MCF 10A (cell line): ENCODE measurements at regions of chr1 and their contacts with region 1.

Region 1: GRCh38 chr1:45654540-45655280 is 30.9 kb upstream of the CCDC17 start:
- DNase-seq: peak; percentile 46
- H3K4me3 Mint-ChIP-seq: no peak overlapping the region
- H3K27ac Mint-ChIP-seq: peak overlapping the region; percentile 8
- H3K4me1 Mint-ChIP-seq: peaks cover 14% of the 10 kb centered on the region
- H3K27me3 Mint-ChIP-seq: no peaks in the 10 kb centered on the region
- CTCF ChIP-seq: no peak

Region 2: GRCh38 chr1:45430490-45430889 is 224.2 kb before region 1 on chr1:
- CTCF ChIA-PET with region 1: no interaction called
- POLR2A ChIA-PET with region 1: no interaction called
- intact Hi-C with region 1: no loop called
- DNase-seq: no peak
- H3K4me3 Mint-ChIP-seq: no peak overlapping the region
- H3K27ac Mint-ChIP-seq: no peak overlapping the region
- H3K4me1 Mint-ChIP-seq: no peaks in the 10 kb centered on the region
- H3K27me3 Mint-ChIP-seq: no peaks in the 10 kb centered on the region
- CTCF ChIP-seq: no peak

Region 3: DNA sequence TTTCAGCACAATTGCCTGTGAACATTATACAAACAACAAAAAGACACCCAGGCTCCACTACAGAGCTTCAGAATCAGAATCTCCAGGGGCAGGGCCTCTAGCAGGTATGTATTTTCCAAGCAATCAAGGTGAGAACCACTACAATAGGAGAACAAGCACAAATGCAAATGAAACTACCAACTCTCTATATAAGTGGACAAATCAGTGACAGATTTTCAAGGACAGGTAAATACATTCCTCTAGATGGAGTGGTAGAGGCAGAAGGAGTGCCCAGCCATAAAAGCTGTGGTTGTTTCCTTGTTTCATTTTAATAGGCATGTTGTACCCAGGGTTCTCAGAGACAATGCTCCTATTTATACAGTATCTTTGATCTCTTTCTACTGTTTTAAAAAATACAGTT is 10.7 kb before region 1 on chr1:
- CTCF ChIA-PET with region 1: interaction called, 3 read pairs
- POLR2A ChIA-PET with region 1: interaction called, 12 read pairs
- intact Hi-C with region 1: no loop called
- DNase-seq: no peak
- H3K4me3 Mint-ChIP-seq: no peak overlapping the region
- H3K27ac Mint-ChIP-seq: no peak overlapping the region
- H3K4me1 Mint-ChIP-seq: peaks cover 3% of the 10 kb centered on the region
- H3K27me3 Mint-ChIP-seq: no peaks in the 10 kb centered on the region
- CTCF ChIP-seq: no peak